Heart right ventricle (tissue), 16 donors: ENCODE measurements at regions of chr19 and their contacts with region 1.

Region 1: DNA sequence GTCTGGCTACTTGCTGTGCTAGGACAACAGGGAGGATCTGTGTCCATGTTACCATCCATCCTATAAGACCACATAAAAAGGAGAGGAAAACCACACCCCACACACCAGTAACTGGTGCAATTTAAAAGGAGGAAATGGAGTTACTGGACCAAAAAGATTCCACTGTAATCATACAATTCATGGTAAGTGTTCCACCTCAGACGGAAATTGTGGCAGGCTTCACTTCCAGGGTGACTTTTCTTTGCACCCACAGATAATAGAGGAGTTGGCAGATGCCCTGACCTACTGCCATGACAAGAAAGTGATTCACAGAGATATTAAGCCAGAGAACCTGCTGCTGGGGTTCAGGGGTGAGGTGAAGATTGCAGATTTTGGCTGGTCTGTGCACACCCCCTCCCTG is 2.4 kb downstream of the AURKC start:
- DNase-seq: no peak
- ATAC-seq: no peak
- H3K4me3 ChIP-seq: no peak overlapping the region
- H3K27ac ChIP-seq: no peak overlapping the region
- H3K4me1 ChIP-seq: no peaks in the 10 kb centered on the region
- H3K27me3 ChIP-seq: no peaks in the 10 kb centered on the region
- CTCF ChIP-seq: no peak

Region 2: DNA sequence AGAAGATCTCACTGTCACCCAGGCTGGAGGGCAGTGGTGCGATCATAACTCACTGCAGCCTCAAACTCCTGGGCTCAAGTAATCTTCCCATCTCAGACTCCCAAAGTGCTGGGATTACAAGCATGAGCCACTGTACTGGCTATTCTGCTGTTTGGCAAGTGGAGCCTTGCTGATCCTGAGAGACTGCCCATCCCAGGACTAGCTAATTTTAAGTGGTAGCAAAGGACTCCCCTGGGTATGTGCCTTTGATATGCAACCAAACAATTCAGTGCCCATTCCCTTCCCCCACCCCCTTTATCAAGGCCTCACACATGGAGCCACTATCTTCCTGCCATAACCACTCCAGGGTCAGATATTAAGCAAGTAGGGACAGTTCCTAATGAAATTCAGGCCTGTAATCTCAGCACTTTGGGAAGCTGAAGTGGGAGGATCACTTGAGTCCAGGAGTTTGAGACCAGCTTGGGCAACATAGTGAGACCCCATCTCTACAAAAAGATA is 30.1 kb after region 1 on chr19:
- intact Hi-C with region 1: loop called in 1 of 10 experiments (anchors 1 kb)
- DNase-seq: no peak
- ATAC-seq: no peak
- H3K4me3 ChIP-seq: no peak overlapping the region
- H3K27ac ChIP-seq: no peak overlapping the region
- H3K4me1 ChIP-seq: no peaks in the 10 kb centered on the region
- H3K27me3 ChIP-seq: no peaks in the 10 kb centered on the region
- CTCF ChIP-seq: no peak